Ovary (tissue), 10 donors: ENCODE measurements at regions of chr2 and their contacts with region 1.

Region 1: DNA sequence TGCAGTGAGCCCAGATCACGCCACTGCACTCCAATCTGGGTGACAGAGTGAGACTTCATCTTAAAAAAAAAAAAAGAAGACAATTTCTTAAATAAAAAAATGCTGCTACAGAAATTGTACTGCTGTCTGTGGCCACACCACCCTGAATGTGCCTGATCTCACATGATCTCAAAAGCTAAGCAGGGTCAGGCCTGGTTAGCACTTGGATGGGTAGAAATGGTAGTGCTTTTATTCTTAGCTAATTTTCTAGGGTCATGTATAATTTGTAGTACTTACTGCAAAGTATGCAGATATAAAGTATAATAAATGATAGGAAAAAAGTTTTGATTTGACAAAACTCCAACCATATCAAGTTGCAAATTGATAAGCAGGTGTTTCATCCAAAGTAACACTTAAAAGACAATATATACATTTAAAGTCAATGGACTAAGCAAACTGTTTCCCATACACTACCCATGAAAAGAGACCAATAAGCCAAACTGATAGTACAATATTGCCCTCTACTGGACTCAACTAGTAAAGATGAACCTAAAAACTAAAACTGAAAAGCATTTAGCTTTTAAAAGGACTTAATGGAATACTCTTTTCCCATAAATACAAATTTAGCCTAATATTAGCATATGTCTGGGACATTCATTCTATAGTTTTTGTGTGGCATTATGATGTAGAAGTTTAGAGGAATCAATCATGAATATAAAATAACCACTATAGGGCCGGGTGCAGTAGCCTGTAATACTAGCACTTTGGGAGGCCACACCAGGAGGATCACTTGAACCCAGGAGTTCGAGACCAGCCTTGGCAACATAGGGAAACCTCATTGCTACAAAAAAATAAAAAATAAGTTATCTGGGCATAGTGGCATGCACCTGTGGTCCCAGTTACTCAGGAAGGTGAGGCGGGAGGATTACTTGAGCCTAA is 18.6 kb upstream of the PEX13 start:
- DNase-seq: no peak
- H3K4me3 ChIP-seq: no peak overlapping the region
- H3K27ac ChIP-seq: no peak overlapping the region
- H3K4me1 ChIP-seq: no peaks in the 10 kb centered on the region
- H3K27me3 ChIP-seq: no peaks in the 10 kb centered on the region
- CTCF ChIP-seq: peak; percentile 21 to 58 (median 35)
- EP300 ChIP-seq: no peak
- POLR2A ChIP-seq: no peak

Region 2: DNA sequence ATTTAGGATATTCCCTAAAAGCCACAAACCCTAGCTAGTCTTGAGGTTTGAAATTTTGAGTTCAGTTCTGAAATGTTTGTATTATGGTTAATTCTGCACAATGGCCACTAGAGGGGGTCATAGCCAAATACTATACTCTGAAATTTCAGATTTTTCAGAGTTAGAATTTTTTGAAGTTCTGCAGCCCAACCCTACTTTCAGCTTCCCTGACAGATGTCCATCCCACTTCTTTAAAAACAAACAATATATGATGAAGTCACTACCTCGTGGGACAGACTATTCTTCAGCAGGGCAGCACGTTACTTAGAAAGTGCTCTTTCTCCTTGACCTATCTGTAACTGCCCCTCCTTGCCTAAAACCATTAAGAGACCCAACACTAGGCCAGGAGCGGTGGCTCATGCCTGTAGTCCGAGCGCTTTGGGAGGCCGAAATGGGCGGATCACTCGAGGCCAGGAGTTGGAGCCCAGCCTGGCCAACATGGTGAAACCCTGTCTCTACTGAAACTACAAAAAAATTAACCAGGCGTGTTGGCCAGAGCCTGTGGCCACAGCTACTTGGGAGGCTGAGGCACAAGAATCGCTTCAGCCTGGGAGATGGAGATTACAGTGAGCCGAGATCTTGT is 291.0 kb before region 1 on chr2:
- intact Hi-C with region 1: loop called (anchors 5 kb)
- DNase-seq: no peak
- H3K4me3 ChIP-seq: no peak overlapping the region
- H3K27ac ChIP-seq: no peak overlapping the region
- H3K4me1 ChIP-seq: no peaks in the 10 kb centered on the region
- H3K27me3 ChIP-seq: no peaks in the 10 kb centered on the region
- CTCF ChIP-seq: peak in 2 of 3 donors; percentile 61 to 63
- EP300 ChIP-seq: no peak
- POLR2A ChIP-seq: no peak

Region 3: DNA sequence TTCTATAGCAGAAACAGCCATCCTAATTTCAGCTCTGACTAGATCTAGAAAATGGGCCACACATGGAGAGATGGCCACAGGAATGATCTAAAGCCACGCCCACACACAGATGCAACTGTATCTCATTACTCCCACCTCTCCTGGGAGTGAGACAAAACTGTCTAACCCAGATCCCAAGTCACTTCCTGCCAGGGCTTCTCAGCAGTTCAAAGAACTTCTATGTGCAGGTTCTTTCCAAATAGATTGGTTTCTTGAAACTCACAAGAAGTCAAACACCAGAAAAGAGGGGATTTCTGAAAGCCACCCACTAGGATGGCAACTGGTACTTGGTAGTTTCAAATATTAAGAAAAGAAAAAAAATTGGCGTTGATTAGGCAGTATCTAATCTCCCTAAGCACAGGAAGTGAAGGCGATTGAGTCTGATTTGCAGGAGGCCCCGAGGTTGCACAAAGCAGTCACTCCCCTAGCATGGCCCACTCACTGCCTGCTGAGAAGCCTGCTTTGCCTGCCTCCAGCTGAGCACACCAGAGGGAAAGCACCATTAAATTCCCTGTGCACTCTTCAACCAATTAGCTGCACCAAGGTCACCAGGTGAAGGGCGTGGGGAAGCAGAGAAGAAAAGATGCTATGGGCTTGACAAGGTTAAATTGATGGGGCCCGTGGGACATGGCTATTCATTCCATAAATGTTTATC is 191.8 kb before region 1 on chr2:
- intact Hi-C with region 1: loop called in 2 of 4 experiments (anchors 10 kb)
- DNase-seq: no peak
- H3K4me3 ChIP-seq: no peak overlapping the region
- H3K27ac ChIP-seq: no peak overlapping the region
- H3K4me1 ChIP-seq: no peaks in the 10 kb centered on the region
- H3K27me3 ChIP-seq: no peaks in the 10 kb centered on the region
- CTCF ChIP-seq: no peak
- EP300 ChIP-seq: no peak
- POLR2A ChIP-seq: no peak